ENCODE measurements at regions of chr18 and their contacts with region 1.

Region 1: DNA sequence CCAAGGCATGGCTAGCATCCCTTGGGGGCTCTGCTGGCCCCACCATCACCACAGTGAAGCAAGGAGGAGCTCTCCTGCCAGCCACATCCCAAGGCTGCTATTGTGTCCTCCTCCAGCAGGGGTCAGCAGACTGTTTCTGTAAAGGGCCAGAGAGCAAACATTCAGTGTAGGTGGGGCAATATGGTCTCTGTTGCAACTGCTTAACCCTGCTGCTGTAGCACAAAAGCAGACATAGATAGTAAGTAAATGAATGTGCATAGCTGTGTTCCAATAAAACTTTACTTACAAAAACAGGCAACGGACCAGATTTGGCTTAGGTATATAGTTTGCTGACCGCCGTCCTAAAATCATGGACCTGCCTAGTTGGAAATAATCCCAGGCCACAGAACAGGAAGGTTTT is 36.4 kb upstream of the ZBTB7C start:
- DNase-seq: peak; percentile 53 to 77 (median 61)
- ATAC-seq: peak; percentile 63 to 82 (median 72)
- H3K4me3 ChIP-seq: no peak overlapping the region
- H3K27ac ChIP-seq: no peak overlapping the region
- H3K4me1 ChIP-seq: peaks cover 0 to 36% (median 17%) of the 10 kb centered on the region in 12 donors
- H3K27me3 ChIP-seq: peaks cover 0 to 4% (median 0%) of the 10 kb centered on the region in 9 donors
- CTCF ChIP-seq: peak; percentile 76 to 90 (median 84)
- POLR2A ChIP-seq: no peak

Region 2: GRCh38 chr18:47781554-47781953 is 664.0 kb before region 1 on chr18:
- intact Hi-C with region 1: loop called in 5 of 10 experiments (anchors 10 kb)
- DNase-seq: no peak
- ATAC-seq: no peak
- H3K4me3 ChIP-seq: no peak overlapping the region
- H3K27ac ChIP-seq: no peak overlapping the region
- H3K4me1 ChIP-seq: no peaks in the 10 kb centered on the region
- H3K27me3 ChIP-seq: peaks cover 0 to 1% (median 0%) of the 10 kb centered on the region in 9 donors
- CTCF ChIP-seq: no peak
- POLR2A ChIP-seq: no peak

Region 3: GRCh38 chr18:48037481-48038271 is 407.9 kb before region 1 on chr18:
- intact Hi-C with region 1: loop called in 2 of 10 experiments (anchors 1 to 2 kb)
- DNase-seq: peak in 3 of 5 donors; percentile 43 to 61 (median 44)
- ATAC-seq: peak; percentile 66 to 84 (median 74)
- H3K4me3 ChIP-seq: no peak overlapping the region
- H3K27ac ChIP-seq: no peak overlapping the region
- H3K4me1 ChIP-seq: peaks cover 0 to 27% (median 2%) of the 10 kb centered on the region in 12 donors
- H3K27me3 ChIP-seq: no peaks in the 10 kb centered on the region
- CTCF ChIP-seq: peak; percentile 24 to 65 (median 54)
- POLR2A ChIP-seq: no peak

Region 4: DNA sequence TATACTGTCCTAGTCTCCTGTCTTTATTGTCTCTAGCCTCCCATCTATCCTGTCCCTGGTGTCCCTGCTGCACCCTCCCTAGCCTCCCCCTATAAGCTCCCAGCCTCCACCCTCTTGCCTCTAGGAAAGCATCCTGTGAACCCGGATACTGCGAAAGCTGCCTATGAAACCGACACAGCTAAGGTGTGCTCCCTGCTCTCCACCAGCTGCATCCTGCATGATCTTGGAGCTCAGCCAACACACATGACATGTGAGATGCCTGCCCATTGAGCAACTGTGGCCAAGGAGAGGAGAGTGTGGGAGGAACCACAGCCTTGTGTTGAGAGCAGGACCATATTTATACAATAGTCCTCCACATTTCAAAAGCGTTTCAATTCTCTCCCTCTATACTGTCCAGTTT is 223.4 kb before region 1 on chr18:
- intact Hi-C with region 1: loop called in 3 of 10 experiments (anchors 5 to 10 kb)
- DNase-seq: peak in 4 of 5 donors; percentile 51 to 72 (median 66)
- ATAC-seq: peak; percentile 45 to 87 (median 69)
- H3K4me3 ChIP-seq: no peak overlapping the region
- H3K27ac ChIP-seq: no peak overlapping the region
- H3K4me1 ChIP-seq: peaks cover 0 to 22% (median 6%) of the 10 kb centered on the region in 12 donors
- H3K27me3 ChIP-seq: no peaks in the 10 kb centered on the region
- CTCF ChIP-seq: no peak
- POLR2A ChIP-seq: no peak

Region 5: GRCh38 chr18:48330403-48331022 is 115.0 kb before region 1 on chr18:
- intact Hi-C with region 1: loop called in 1 of 10 experiments (anchors 10 kb)
- DNase-seq: no peak
- ATAC-seq: peak in 2 of 4 donors; percentile 45 to 47
- H3K4me3 ChIP-seq: no peak overlapping the region
- H3K27ac ChIP-seq: no peak overlapping the region
- H3K4me1 ChIP-seq: peaks cover 0 to 4% (median 0%) of the 10 kb centered on the region in 12 donors
- H3K27me3 ChIP-seq: no peaks in the 10 kb centered on the region
- CTCF ChIP-seq: no peak
- POLR2A ChIP-seq: no peak

Region 6: DNA sequence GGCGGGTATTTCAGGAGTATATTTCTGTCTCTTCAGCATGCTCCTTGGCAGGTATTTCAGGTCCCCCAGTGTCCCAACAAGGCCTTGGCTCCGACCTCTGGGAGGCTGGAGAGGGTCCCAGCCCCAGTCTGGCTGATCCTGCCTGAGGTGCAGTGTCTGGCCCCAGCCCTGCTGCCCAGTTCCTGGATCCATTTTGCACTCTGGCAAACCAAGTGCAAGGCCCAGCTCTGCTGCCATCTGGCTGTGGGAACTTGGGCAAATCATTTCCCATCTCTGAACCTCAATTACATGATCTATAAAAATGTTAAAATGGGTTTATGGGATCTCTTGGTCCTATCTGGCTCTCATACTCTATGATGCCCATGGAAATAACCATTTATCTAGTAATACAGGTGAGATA is 99.9 kb before region 1 on chr18:
- intact Hi-C with region 1: loop called in 5 of 10 experiments (anchors 2 to 5 kb)
- DNase-seq: no peak
- ATAC-seq: peak in 2 of 4 donors; percentile 38 to 51
- H3K4me3 ChIP-seq: no peak overlapping the region
- H3K27ac ChIP-seq: no peak overlapping the region
- H3K4me1 ChIP-seq: peaks cover 0 to 13% (median 5%) of the 10 kb centered on the region in 12 donors
- H3K27me3 ChIP-seq: no peaks in the 10 kb centered on the region
- CTCF ChIP-seq: peak in 8 of 12 donors; percentile 11 to 40 (median 26)
- POLR2A ChIP-seq: no peak

Region 7: GRCh38 chr18:48428475-48429177 is 16.9 kb before region 1 on chr18:
- intact Hi-C with region 1: no loop called
- DNase-seq: peak in 2 of 5 donors; percentile 45 to 56
- ATAC-seq: peak in 3 of 4 donors; percentile 73 to 80 (median 73)
- H3K4me3 ChIP-seq: no peak overlapping the region
- H3K27ac ChIP-seq: no peak overlapping the region
- H3K4me1 ChIP-seq: no peaks in the 10 kb centered on the region
- H3K27me3 ChIP-seq: peaks cover 0 to 20% (median 0%) of the 10 kb centered on the region in 9 donors
- CTCF ChIP-seq: no peak
- POLR2A ChIP-seq: no peak